ENCODE measurements at regions of chr17 and their contacts with region 1.

Region 1: GRCh38 chr17:34199932-34200534 is 55.1 kb upstream of the CCL2 start:
- DNase-seq: peak; percentile 62 to 85
- H3K4me3 ChIP-seq: no peak overlapping the region
- H3K27ac ChIP-seq: no peak overlapping the region
- H3K4me1 ChIP-seq: peaks cover 0 to 2% (median 0%) of the 10 kb centered on the region in 4 experiments; a peak in 3 of 7 replicates
- H3K27me3 ChIP-seq: no peaks in the 10 kb centered on the region; a peak in 1 of 7 replicates
- CTCF ChIP-seq: peak; percentile 51 to 100 (median 100)
- EP300 ChIP-seq: no peak
- POLR2A ChIP-seq: no peak
- RAD21 ChIP-seq: peak; percentile 99 to 100

Region 2: GRCh38 chr17:33981711-33982601 is 218.1 kb before region 1 on chr17:
- CTCF ChIA-PET with region 1: no interaction called
- POLR2A ChIA-PET with region 1: no interaction called
- DNase-seq: no peak
- H3K4me3 ChIP-seq: no peak overlapping the region
- H3K27ac ChIP-seq: no peak overlapping the region
- H3K4me1 ChIP-seq: peaks cover 0 to 6% (median 0%) of the 10 kb centered on the region in 4 experiments; a peak in 1 of 7 replicates
- H3K27me3 ChIP-seq: no peaks in the 10 kb centered on the region
- CTCF ChIP-seq: no peak
- EP300 ChIP-seq: no peak
- POLR2A ChIP-seq: no peak
- RAD21 ChIP-seq: no peak

Region 3: GRCh38 chr17:34220754-34221395 is 20.8 kb after region 1 on chr17:
- CTCF ChIA-PET with region 1: interaction called, 17 read pairs
- POLR2A ChIA-PET with region 1: interaction called, 3 read pairs
- DNase-seq: no peak
- H3K4me3 ChIP-seq: no peak overlapping the region
- H3K27ac ChIP-seq: no peak overlapping the region
- H3K4me1 ChIP-seq: no peaks in the 10 kb centered on the region
- H3K27me3 ChIP-seq: no peaks in the 10 kb centered on the region
- CTCF ChIP-seq: no peak
- EP300 ChIP-seq: no peak
- POLR2A ChIP-seq: no peak
- RAD21 ChIP-seq: no peak

Region 4: DNA sequence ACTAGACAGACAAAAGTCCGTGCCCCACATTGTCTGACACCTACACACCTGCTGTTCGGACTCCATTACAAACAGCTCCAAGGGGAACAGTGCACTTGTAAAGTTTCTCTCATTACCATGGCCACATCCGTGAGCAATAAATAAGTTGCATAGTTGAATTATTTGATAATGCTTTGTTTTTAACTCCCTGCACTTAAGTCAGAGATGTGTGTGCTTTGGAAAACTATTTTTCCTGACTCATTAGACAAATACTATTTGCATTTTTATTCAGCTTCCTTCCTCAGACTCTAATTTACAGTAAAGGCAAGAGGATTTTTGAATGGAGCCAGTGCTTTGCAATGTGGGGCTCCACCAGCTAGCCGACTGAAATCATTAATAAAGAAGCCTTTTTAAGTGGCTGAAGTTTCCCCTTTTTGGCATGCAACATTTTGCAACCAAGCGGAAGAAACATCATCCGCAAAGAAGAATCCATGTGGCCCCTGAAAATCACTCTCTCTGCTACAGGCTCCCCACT is 48.5 kb after region 1 on chr17:
- CTCF ChIA-PET with region 1: interaction called, 13 read pairs
- POLR2A ChIA-PET with region 1: no interaction called
- DNase-seq: no peak
- H3K4me3 ChIP-seq: no peak overlapping the region
- H3K27ac ChIP-seq: no peak overlapping the region
- H3K4me1 ChIP-seq: peaks cover 0 to 2% (median 0%) of the 10 kb centered on the region in 4 experiments; a peak in 2 of 7 replicates
- H3K27me3 ChIP-seq: peaks cover 0 to 3% (median 0%) of the 10 kb centered on the region in 4 experiments; a peak in 1 of 7 replicates
- CTCF ChIP-seq: no peak
- EP300 ChIP-seq: no peak
- POLR2A ChIP-seq: no peak
- RAD21 ChIP-seq: no peak

Region 5: DNA sequence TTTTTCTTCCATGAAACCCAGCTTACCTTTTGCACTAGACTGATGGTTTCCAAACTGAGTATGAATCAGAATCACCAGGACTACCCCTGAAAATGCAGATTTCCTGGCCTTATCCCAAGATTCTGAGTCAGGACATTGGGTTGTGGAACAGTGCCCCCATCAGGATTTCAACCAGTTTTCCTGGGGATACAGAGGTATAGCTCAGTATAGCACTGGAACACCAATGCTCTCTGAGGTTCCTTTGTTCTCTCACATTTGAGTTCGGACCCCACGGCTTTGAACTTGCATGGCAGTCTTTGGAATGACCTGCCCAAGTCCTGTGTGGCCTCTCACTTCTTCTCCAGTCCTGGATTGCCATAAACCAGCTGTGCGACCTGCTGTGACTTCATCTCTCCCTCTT is 106.4 kb after region 1 on chr17:
- CTCF ChIA-PET with region 1: interaction called, 210 read pairs
- POLR2A ChIA-PET with region 1: no interaction called
- DNase-seq: peak; percentile 19 to 51
- H3K4me3 ChIP-seq: no peak overlapping the region
- H3K27ac ChIP-seq: no peak overlapping the region
- H3K4me1 ChIP-seq: no peaks in the 10 kb centered on the region
- H3K27me3 ChIP-seq: no peaks in the 10 kb centered on the region
- CTCF ChIP-seq: peak in 2 of 3 experiments; percentile 79 to 91; a peak in 3 of 4 replicates
- EP300 ChIP-seq: no peak
- POLR2A ChIP-seq: no peak
- RAD21 ChIP-seq: peak; percentile 90 to 93

Region 6: DNA sequence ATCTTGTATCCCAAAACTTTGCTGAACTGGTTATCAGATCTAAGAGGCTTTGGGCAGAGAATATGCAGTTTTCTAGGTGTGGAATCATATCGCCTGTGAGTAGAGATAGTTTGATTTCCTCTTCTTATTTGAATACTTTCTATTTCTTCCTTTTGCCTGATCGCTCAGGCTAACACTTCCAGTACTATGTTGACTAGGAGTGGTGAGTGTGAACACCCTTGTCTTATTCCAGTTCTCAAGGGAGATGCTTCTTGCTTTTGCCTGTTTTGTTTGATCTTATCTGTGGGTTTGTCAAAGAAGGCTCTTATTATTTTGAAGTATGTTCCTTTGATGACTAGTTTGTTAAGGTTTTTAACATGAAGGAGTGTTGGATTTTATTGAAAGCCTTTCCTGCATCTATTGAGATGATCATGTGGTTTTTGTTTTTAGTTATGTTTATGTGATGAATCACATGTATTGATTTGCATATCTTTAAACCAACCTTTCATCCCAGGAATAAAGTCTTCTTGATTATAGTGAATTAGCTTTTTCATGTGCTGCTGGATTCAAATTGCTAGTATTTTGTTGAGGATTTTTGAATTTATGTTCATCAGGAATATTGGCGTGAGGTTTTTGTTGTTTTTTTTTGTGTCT is 139.2 kb after region 1 on chr17:
- CTCF ChIA-PET with region 1: interaction called, 12 read pairs
- POLR2A ChIA-PET with region 1: no interaction called
- DNase-seq: no peak
- H3K4me3 ChIP-seq: no peak overlapping the region
- H3K27ac ChIP-seq: no peak overlapping the region
- H3K4me1 ChIP-seq: no peaks in the 10 kb centered on the region
- H3K27me3 ChIP-seq: no peaks in the 10 kb centered on the region
- CTCF ChIP-seq: no peak
- EP300 ChIP-seq: no peak
- POLR2A ChIP-seq: no peak
- RAD21 ChIP-seq: no peak